ENCODE measurements at regions of chr12 and their contacts with region 1.

Region 1: DNA sequence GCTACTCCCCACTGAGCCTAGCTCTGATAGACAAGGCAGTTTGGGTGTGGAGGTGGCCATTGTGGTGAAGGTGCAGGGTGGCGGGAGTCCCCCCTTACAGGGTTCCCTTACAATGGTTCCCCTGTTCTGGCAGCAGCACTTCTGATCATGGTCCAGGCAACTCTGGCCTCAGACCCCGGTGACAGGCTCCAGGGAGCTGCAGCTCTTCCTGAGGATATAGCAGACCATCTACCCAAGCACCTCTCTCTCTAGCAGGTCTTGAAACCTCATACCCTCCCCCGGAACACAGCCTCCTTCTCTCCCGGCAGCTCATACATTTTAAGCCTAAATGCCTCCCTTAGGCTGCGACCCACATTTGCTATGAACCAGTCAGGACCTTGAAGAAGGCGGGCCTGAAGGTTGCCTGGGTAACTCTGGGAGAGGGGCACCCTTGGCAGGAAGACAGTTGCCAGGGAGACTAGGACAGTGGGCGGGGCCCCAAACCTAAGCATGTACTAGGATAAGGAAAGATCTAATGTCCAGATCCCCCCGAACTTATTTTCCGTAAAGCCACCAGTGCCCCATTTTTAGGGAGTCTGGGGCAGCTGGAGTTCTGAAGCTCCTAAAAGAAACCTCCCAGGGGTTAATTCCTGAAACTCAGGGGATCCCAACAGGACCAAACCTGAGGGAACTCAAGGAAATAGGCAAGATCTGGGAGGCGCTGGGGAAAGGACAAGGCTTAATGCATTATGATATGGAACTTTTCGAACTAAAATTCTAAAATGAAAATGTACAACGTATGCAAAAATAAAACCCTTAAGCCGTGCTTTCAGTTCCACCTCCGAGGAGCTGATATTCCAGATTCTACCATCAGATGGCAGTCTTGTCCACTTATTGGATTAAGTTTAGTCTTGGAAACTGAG is 4.5 kb upstream of the GDF11 start:
- DNase-seq: peak in 8 of 9 donors; percentile 69 to 88 (median 81)
- ATAC-seq: peak; percentile 79
- H3K4me3 ChIP-seq: peak overlapping the region; percentile 91
- H3K4me3 Mint-ChIP-seq: peak overlapping the region; percentile 74 to 94 (median 89)
- H3K27ac ChIP-seq: peak overlapping the region; percentile 76
- H3K27ac Mint-ChIP-seq: peak overlapping the region; percentile 86 to 96 (median 92)
- H3K4me1 ChIP-seq: peaks cover 15 to 18% of the 10 kb centered on the region in 2 donors
- H3K4me1 Mint-ChIP-seq: peaks cover 26 to 43% (median 29%) of the 10 kb centered on the region in 7 donors
- H3K27me3 ChIP-seq: no peaks in the 10 kb centered on the region
- H3K27me3 Mint-ChIP-seq: peaks cover 0 to 8% (median 0%) of the 10 kb centered on the region in 5 donors

Region 2: GRCh38 chr12:55642669-55643068 is 95.7 kb before region 1 on chr12:
- CTCF ChIA-PET with region 1: no interaction called
- POLR2A ChIA-PET with region 1: no interaction called
- intact Hi-C with region 1: loop called (anchors 1 kb)
- DNase-seq: no peak
- ATAC-seq: no peak
- H3K4me3 ChIP-seq: no peak overlapping the region
- H3K4me3 Mint-ChIP-seq: no peak overlapping the region
- H3K27ac ChIP-seq: no peak overlapping the region
- H3K27ac Mint-ChIP-seq: peak overlapping the region in 1 of 9 donors; percentile 16
- H3K4me1 ChIP-seq: peaks cover 0 to 4% of the 10 kb centered on the region in 2 donors
- H3K4me1 Mint-ChIP-seq: peaks cover 21 to 30% (median 24%) of the 10 kb centered on the region in 7 donors
- H3K27me3 ChIP-seq: no peaks in the 10 kb centered on the region
- H3K27me3 Mint-ChIP-seq: peaks cover 0 to 5% (median 2%) of the 10 kb centered on the region in 5 donors

Region 3: DNA sequence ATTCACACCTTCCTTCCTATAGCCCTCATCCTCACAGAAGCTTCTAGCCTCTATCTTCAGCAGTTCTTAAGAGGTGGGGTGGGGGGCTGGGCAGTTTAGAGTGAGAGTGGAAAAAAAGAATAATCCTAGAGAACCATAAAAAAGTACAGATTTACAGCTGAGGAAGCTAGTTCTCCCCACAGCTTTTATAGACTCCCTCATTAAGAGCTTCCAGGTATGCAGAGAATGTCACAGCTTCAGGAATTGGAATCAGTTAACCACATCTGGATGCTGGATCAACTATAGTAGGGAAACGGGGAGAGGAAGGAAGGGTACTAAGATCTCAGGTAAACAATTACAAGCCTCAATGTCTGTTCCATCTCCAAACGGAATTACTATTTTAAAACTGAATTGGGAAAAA is 16.9 kb after region 1 on chr12:
- CTCF ChIA-PET with region 1: interaction called, 10 read pairs
- POLR2A ChIA-PET with region 1: interaction called, 7 read pairs
- intact Hi-C with region 1: no loop called
- DNase-seq: no peak
- ATAC-seq: no peak
- H3K4me3 ChIP-seq: no peak overlapping the region
- H3K4me3 Mint-ChIP-seq: peak overlapping the region in 1 of 10 donors; percentile 12
- H3K27ac ChIP-seq: no peak overlapping the region
- H3K27ac Mint-ChIP-seq: peak overlapping the region; percentile 6 to 79 (median 61)
- H3K4me1 ChIP-seq: no peaks in the 10 kb centered on the region
- H3K4me1 Mint-ChIP-seq: peaks cover 0 to 10% (median 4%) of the 10 kb centered on the region in 7 donors
- H3K27me3 ChIP-seq: no peaks in the 10 kb centered on the region
- H3K27me3 Mint-ChIP-seq: no peaks in the 10 kb centered on the region

Region 4: GRCh38 chr12:55931780-55932550 is 193.6 kb after region 1 on chr12:
- CTCF ChIA-PET with region 1: interaction called, 17 read pairs
- POLR2A ChIA-PET with region 1: interaction called, 17 read pairs
- intact Hi-C with region 1: loop called (anchors 1 to 2 kb)
- DNase-seq: peak in 1 of 9 donors; percentile 54
- ATAC-seq: no peak
- H3K4me3 ChIP-seq: peak overlapping the region; percentile 82
- H3K4me3 Mint-ChIP-seq: peak overlapping the region; percentile 96 to 100 (median 98)
- H3K27ac ChIP-seq: peak overlapping the region; percentile 90
- H3K27ac Mint-ChIP-seq: peak overlapping the region; percentile 96 to 100 (median 98)
- H3K4me1 ChIP-seq: peaks cover 29 to 56% of the 10 kb centered on the region in 2 donors
- H3K4me1 Mint-ChIP-seq: peaks cover 34 to 61% (median 47%) of the 10 kb centered on the region in 7 donors
- H3K27me3 ChIP-seq: no peaks in the 10 kb centered on the region
- H3K27me3 Mint-ChIP-seq: peaks cover 0 to under 1% (median 0%) of the 10 kb centered on the region in 5 donors

Region 5: DNA sequence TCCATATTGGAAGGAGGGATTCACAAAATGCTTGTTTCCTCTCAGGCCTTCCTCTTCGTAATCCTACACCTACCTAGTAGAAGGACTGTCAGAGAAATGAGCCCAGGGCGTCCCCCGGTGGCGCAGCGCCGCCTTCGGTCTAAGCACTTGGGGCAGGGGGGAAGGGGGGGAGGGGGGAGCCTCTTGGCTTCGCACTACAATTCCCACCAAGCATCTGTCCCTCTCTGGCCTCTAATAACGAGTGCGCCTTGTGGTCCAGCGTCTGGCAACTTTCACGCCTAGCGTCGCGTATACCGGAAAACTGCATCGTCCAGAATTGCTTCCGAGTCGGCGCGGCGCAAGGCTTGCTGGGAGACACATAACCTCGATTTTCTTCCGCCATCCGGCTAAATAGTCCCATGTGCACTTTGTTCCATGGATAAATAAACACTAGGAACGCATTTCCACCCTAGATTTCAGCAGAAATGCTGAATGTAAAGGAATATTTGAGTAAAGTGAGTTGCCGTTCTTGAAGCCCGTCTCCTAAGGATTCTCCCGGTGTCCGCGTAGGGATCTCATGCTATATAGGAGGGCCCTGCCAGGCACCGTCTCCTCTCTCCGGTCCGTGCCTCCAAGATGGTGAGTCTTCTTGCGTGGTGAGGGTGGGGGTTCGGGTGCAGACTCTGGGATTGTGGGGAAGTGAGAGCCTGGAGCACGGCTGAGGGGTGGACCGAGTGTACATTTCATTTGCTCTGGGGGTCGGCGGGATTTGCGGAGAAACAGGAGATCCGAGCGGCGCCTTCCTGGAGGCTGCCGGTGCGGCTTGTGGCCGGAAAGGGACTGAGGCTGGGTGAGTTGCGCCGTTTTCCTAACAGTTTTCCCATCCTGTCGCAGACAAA is 303.4 kb after region 1 on chr12 and contains the start of gene RPS26:
- CTCF ChIA-PET with region 1: interaction called, 3 read pairs
- POLR2A ChIA-PET with region 1: interaction called, 5 read pairs
- intact Hi-C with region 1: loop called (anchors 1 kb)
- DNase-seq: peak; percentile 75 to 97 (median 94)
- ATAC-seq: peak; percentile 94
- H3K4me3 ChIP-seq: peak within 1 kb of the TSS; percentile 100
- H3K4me3 Mint-ChIP-seq: peak within 1 kb of the TSS; percentile 91 to 100 (median 98)
- H3K27ac ChIP-seq: peak within 1 kb of the TSS; percentile 84
- H3K27ac Mint-ChIP-seq: peak within 1 kb of the TSS; percentile 94 to 99 (median 97)
- H3K4me1 ChIP-seq: peaks cover 16 to 19% of the 10 kb centered on the region in 2 donors
- H3K4me1 Mint-ChIP-seq: peaks cover 14 to 56% (median 34%) of the 10 kb centered on the region in 7 donors
- H3K27me3 ChIP-seq: no peaks in the 10 kb centered on the region
- H3K27me3 Mint-ChIP-seq: no peaks in the 10 kb centered on the region
- total RNA-seq, gene RPS26: 40.8 to 64.5 (median 46.4) TPM

Region 6: GRCh38 chr12:56258057-56258819 is 519.9 kb after region 1 on chr12 and contains the start of gene ANKRD52:
- CTCF ChIA-PET with region 1: interaction called, 5 read pairs
- POLR2A ChIA-PET with region 1: no interaction called
- intact Hi-C with region 1: loop called in 1 of 2 experiments (anchors 1 kb)
- DNase-seq: peak; percentile 69 to 92 (median 84)
- ATAC-seq: peak; percentile 99
- H3K4me3 ChIP-seq: peak within 1 kb of the TSS; percentile 99
- H3K4me3 Mint-ChIP-seq: peak within 1 kb of the TSS; percentile 87 to 97 (median 93)
- H3K27ac ChIP-seq: peak within 1 kb of the TSS; percentile 90
- H3K27ac Mint-ChIP-seq: peak within 1 kb of the TSS; percentile 83 to 94 (median 90)
- H3K4me1 ChIP-seq: peaks cover 18 to 19% of the 10 kb centered on the region in 2 donors
- H3K4me1 Mint-ChIP-seq: peaks cover 13 to 27% (median 22%) of the 10 kb centered on the region in 7 donors
- H3K27me3 ChIP-seq: no peaks in the 10 kb centered on the region
- H3K27me3 Mint-ChIP-seq: peaks cover 0 to 2% (median 0%) of the 10 kb centered on the region in 5 donors
- total RNA-seq, gene ANKRD52: 26.9 to 64.4 (median 40.7) TPM